ENCODE measurements at regions of chr9 and their contacts with region 1.

Region 1: GRCh38 chr9:75866273-75866871 is 24.1 kb upstream of the PCSK5 start:
- DNase-seq: peak; percentile 81
- H3K4me3 Mint-ChIP-seq: no peak overlapping the region
- H3K27ac Mint-ChIP-seq: no peak overlapping the region
- H3K4me1 Mint-ChIP-seq: no peaks in the 10 kb centered on the region
- H3K27me3 Mint-ChIP-seq: peaks cover 8% of the 10 kb centered on the region

Region 2: GRCh38 chr9:75200892-75201470 is 665.4 kb before region 1 on chr9:
- intact Hi-C with region 1: loop called (anchors 2 kb)
- DNase-seq: peak; percentile 74
- H3K4me3 Mint-ChIP-seq: no peak overlapping the region
- H3K27ac Mint-ChIP-seq: no peak overlapping the region
- H3K4me1 Mint-ChIP-seq: peaks cover 2% of the 10 kb centered on the region
- H3K27me3 Mint-ChIP-seq: peaks cover 2% of the 10 kb centered on the region

Region 3: DNA sequence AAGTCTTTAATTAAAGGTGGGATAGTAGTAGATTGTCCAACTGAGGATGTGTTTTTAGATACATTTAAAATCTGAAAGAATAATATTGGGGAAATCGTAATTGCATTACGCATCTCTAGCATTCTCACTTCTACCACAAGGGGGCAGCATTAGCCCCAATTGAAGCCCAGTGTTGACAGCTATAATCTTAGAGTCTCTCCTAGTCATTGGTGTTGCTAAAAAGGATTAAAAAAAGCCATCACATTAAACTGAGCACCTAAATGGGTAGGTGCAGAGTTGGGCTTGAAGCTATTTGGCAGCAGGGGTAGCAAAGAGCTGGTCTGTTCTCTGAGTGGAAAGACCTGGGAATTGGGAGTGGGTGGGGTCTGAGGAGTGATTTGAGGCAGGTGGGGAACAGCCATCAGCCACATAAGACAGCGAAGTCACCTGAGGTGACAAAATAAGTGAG is 600.8 kb before region 1 on chr9:
- intact Hi-C with region 1: loop called (anchors 5 kb)
- DNase-seq: peak; percentile 83
- H3K4me3 Mint-ChIP-seq: no peak overlapping the region
- H3K27ac Mint-ChIP-seq: no peak overlapping the region
- H3K4me1 Mint-ChIP-seq: peaks cover 2% of the 10 kb centered on the region
- H3K27me3 Mint-ChIP-seq: no peaks in the 10 kb centered on the region

Region 4: DNA sequence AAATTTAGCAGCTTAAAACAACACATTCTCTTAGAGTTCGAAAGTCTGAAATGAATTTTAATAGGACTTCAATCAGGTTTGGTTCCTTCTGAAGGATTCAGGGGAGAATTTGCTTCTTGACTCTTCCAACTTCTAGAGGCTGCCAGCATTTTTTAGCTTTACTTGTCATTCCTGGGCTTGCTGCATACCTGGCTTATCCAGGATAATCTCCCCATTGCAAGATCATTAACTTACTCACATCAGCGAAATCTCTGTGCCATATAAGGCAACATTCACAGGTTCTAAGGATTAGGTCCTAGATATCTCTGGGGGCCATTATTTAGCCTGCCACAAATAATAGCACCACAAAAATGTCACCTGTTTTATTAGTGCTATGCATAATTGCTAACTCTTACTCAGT is 22.1 kb before region 1 on chr9:
- intact Hi-C with region 1: no loop called
- DNase-seq: no peak
- H3K4me3 Mint-ChIP-seq: no peak overlapping the region
- H3K27ac Mint-ChIP-seq: no peak overlapping the region
- H3K4me1 Mint-ChIP-seq: no peaks in the 10 kb centered on the region
- H3K27me3 Mint-ChIP-seq: no peaks in the 10 kb centered on the region

Region 5: DNA sequence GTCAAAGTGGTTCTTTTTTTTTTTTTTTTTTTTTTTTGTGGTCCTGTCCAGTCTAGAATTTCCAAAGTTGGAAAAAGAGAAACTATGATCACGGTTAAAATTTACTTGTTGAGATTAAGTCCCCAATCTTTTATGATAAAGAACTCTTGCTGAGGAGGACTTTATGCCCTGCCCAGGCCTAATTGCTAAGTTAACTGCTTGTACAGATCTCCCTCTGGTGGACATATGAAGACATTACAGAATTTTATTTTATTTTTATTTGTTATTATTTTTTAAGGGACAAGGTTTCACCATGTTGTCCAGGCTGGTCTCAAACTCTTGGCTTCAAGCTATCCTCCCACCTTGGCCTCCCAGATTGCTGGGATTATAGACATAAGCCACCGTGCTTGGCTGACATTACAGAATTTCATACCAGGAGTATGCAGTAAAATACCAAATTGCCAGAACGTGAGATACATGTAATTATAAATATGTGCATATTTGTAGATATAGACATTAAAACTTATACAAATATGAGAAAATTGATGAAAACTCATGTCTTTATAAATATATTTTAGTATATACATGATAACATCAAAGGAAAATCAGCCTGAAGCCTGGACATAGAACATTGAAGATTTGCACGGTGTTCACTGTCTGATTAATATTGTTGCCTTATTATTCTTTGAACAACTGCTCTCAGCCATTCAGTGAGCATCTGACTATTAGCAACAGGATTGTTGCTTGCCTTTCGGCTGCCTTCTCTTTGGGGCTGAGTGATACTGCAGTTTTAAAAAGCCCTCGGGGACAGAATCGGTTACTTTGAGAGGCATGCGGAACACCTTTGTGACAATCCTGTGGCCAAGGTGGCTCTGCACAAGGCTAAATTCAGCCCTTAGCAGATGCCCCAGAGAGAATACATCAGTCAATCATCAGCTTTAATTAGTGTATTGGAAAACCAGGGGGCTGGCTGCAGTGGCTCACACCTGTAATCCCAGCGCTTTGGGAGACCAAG is 436.9 kb after region 1 on chr9:
- intact Hi-C with region 1: loop called (anchors 5 kb)
- DNase-seq: peak; percentile 64
- H3K4me3 Mint-ChIP-seq: no peak overlapping the region
- H3K27ac Mint-ChIP-seq: no peak overlapping the region
- H3K4me1 Mint-ChIP-seq: no peaks in the 10 kb centered on the region
- H3K27me3 Mint-ChIP-seq: peaks cover 7% of the 10 kb centered on the region

Measured in activated CD4-positive, alpha-beta T cell treated with anti-CD3 and anti-CD28 coated beads, Interleukin-2, amount 10 ng/mL, durations not matched to agents 24 days and 14 days (primary cell).